ENCODE measurements at regions of chr17 and their contacts with region 1.

Region 1: DNA sequence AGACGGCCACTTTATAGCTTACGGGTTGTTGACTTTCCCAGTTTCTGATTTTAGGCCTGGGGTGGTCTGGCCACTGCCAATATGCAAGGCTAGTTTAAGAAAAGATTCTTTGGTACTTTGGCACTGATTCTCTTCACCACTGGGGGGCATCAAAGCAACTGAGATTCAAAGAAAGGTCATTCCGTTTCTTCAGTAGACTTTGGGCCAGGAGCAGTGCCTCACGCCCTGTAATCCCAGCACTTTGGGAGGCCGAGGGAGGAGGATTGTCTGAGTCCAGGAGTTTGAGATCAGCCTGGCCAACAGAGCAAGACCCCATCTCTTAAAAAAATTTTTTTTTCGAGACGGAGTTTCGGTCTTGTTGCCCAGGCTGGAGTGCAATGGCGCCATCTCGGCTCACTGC is 53.0 kb downstream of the RPA1 start:
- DNase-seq: peak in 2 of 3 donors; percentile 9 to 19
- H3K4me3 ChIP-seq: no peak overlapping the region
- H3K4me3 Mint-ChIP-seq: no peak overlapping the region
- H3K27ac ChIP-seq: no peak overlapping the region
- H3K27ac Mint-ChIP-seq: no peak overlapping the region
- H3K4me1 ChIP-seq: no peaks in the 10 kb centered on the region
- H3K4me1 Mint-ChIP-seq: no peaks in the 10 kb centered on the region
- H3K27me3 ChIP-seq: no peaks in the 10 kb centered on the region
- H3K27me3 Mint-ChIP-seq: peaks cover 0 to 3% (median 0%) of the 10 kb centered on the region in 3 donors
- CTCF ChIP-seq: peak; percentile 43

Region 2: GRCh38 chr17:2029911-2030778 is 147.3 kb after region 1 on chr17 and contains the start of gene DPH1:
- intact Hi-C with region 1: loop called in 1 of 2 experiments (anchors 10 kb)
- DNase-seq: peak; percentile 73 to 77 (median 77)
- H3K4me3 ChIP-seq: peak within 1 kb of the TSS; percentile 66 to 99 (median 91)
- H3K4me3 Mint-ChIP-seq: peak within 1 kb of the TSS; percentile 95 to 97
- H3K27ac ChIP-seq: peak within 1 kb of the TSS in 1 of 2 donors; percentile 36
- H3K27ac Mint-ChIP-seq: peak within 1 kb of the TSS; percentile 54 to 87 (median 80)
- H3K4me1 ChIP-seq: peaks cover 26 to 33% of the 10 kb centered on the region in 2 donors
- H3K4me1 Mint-ChIP-seq: peaks cover 27% of the 10 kb centered on the region
- H3K27me3 ChIP-seq: peaks cover 22 to 46% of the 10 kb centered on the region in 2 donors
- H3K27me3 Mint-ChIP-seq: peaks cover 46 to 49% (median 47%) of the 10 kb centered on the region in 3 donors
- CTCF ChIP-seq: no peak
- polyA plus RNA-seq, gene DPH1: 7.5 to 29.4 (median 9.3) TPM

Region 3: DNA sequence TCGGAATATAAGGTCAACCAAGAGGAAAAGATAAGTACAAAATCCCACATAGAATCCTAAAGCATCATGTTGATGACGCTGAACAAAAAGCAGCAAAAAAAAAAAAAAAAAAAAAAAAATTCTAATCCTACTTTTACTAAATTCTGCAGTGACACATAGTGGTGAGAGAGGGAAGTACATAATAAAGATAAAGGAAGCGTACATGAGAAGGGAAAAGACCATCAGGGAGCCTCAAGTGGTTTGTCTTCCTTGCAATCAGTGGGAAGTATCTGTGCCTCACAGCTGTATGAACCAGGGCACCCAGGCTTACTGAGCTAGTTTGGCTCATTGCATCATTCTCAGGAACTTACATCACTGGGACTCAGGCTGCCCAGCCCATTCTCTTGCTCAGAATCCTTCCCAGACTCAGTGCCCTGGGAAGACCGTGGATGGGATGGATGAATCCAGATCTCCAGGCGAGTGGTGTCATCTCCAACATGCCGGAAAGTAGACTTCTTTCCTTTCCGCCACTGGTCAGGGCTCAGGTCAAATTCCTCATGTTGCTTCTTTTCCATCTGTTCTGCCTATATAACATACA is 399.5 kb after region 1 on chr17:
- intact Hi-C with region 1: loop called in 1 of 2 experiments (anchors 5 kb)
- DNase-seq: peak; percentile 30 to 66 (median 50)
- H3K4me3 ChIP-seq: no peak overlapping the region
- H3K4me3 Mint-ChIP-seq: no peak overlapping the region
- H3K27ac ChIP-seq: peak overlapping the region in 1 of 2 donors; percentile 5
- H3K27ac Mint-ChIP-seq: peak overlapping the region in 3 of 7 donors; percentile 29 to 60 (median 36)
- H3K4me1 ChIP-seq: peaks cover 0 to 4% of the 10 kb centered on the region in 2 donors
- H3K4me1 Mint-ChIP-seq: peaks cover 14% of the 10 kb centered on the region
- H3K27me3 ChIP-seq: no peaks in the 10 kb centered on the region
- H3K27me3 Mint-ChIP-seq: no peaks in the 10 kb centered on the region
- CTCF ChIP-seq: peak; percentile 79

Measured in CD14-positive monocyte (primary cell).